ENCODE measurements at regions of chr7 and their contacts with region 1.

Region 1: GRCh38 chr7:73463260-73463659 is 29.7 kb downstream of the FZD9 start:
- DNase-seq: no peak
- H3K4me3 Mint-ChIP-seq: no peak overlapping the region
- H3K27ac Mint-ChIP-seq: no peak overlapping the region
- H3K4me1 Mint-ChIP-seq: no peaks in the 10 kb centered on the region
- H3K27me3 Mint-ChIP-seq: no peaks in the 10 kb centered on the region

Region 2: DNA sequence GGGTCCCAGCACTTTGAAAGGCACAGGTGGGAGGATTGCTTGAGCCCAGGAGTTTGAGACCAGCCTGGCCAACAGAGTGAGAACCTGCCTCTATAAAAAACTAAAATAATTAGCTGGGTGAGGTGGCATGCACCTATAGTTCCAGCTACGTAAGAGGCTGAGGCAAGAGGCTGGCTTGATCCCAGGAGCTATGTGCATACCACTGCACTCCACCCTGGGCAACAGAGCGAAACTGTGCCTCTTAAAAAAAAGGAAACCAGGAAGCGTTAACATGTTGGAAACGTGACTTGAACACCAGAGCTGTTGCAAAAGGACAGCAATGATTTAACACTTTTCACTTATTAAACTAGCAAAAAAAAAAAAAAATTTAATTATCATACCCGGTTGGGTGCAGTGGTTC is 46.2 kb after region 1 on chr7:
- CTCF ChIA-PET with region 1: interaction called, 4 read pairs
- POLR2A ChIA-PET with region 1: interaction called, 13 read pairs
- DNase-seq: no peak
- H3K4me3 Mint-ChIP-seq: no peak overlapping the region
- H3K27ac Mint-ChIP-seq: no peak overlapping the region
- H3K4me1 Mint-ChIP-seq: peaks cover 14% of the 10 kb centered on the region
- H3K27me3 Mint-ChIP-seq: no peaks in the 10 kb centered on the region

Measured in activated CD4-positive, alpha-beta T cell treated with anti-CD3 and anti-CD28 coated beads, Interleukin-2, amount 10 ng/mL, durations not matched to agents 7 days and 5 days (primary cell).